Heart left ventricle (tissue), 16 donors: ENCODE measurements at regions of chr16 and their contacts with region 1.

Region 1: DNA sequence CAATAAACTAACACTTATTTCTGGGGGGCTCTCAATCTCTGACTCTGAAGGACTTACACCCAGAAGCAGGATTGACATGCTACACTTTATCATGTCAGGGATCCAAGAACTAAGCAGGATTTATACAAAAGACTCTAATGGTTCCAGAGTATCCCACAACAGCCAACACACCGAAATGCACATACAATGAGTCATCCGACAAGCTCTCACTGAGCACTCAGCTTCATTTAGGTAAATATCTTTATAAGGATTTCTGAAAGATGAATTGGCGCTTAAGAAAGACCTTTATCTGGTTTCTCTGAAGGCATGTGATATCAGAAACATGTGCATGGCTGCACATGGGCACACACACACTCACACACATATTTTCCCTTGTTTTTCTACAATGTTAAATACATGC is 77.2 kb downstream of the TOX3 start:
- DNase-seq: no peak
- ATAC-seq: no peak
- H3K4me3 ChIP-seq: no peak overlapping the region
- H3K27ac ChIP-seq: no peak overlapping the region
- H3K4me1 ChIP-seq: no peaks in the 10 kb centered on the region
- H3K27me3 ChIP-seq: no peaks in the 10 kb centered on the region
- CTCF ChIP-seq: no peak
- POLR2A ChIP-seq: no peak

Region 2: GRCh38 chr16:52528393-52529065 is 58.8 kb after region 1 on chr16:
- intact Hi-C with region 1: loop called in 1 of 10 experiments (anchors 10 kb)
- DNase-seq: no peak
- ATAC-seq: no peak
- H3K4me3 ChIP-seq: no peak overlapping the region
- H3K27ac ChIP-seq: no peak overlapping the region
- H3K4me1 ChIP-seq: no peaks in the 10 kb centered on the region
- H3K27me3 ChIP-seq: peaks cover 0 to 5% (median 0%) of the 10 kb centered on the region in 9 donors
- CTCF ChIP-seq: no peak
- POLR2A ChIP-seq: no peak